Heart right ventricle (tissue), 16 donors: ENCODE measurements at regions of chr10 and their contacts with region 1.

Region 1: DNA sequence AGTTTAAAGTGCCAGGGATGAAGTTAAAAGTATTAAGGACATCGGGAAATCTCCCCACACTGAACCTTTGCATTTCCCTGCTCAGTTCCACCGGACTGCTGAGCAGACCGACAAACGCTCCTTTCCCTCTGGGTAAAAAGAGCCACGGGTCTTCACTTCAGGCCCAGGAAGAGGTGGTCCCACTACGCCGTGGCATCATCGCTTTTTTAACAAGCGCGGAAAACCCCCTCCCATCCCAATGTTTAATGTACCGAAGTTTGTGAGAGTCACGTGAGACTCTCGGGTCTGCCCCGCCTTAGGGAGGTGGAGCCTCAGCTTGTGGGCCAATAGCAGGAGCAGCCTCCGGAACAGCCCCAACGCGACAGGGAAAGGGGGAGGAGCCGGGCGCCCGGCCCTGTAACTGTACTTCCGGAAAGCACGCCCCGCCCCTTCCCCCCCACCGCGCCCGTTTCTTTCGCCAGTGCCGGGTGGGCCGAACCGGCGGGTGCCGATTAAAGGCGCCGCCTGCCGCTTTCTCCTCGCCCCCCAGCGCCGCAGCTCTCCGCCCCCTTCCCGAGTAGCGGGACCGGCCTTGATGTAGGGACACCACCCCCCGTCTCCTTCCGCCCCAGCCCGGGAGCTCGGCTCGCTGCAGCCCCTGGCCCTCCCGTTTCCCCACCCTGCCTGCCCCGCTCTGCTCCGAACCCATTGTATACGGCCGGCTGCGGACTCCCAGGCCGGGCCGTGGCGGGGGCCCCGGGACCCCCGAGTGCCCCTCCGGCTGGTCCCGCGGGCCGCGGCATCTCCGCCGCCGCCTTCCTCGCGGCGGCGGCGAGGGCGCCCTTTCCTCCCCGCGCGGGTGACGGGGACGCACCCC is 2.2 kb upstream of the TRIM8 start:
- DNase-seq: peak; percentile 99
- ATAC-seq: peak; percentile 70 to 84 (median 80)
- H3K4me3 ChIP-seq: peak overlapping the region; percentile 69 to 97 (median 90)
- H3K27ac ChIP-seq: peak overlapping the region; percentile 95 to 100 (median 99)
- H3K4me1 ChIP-seq: peaks cover 4 to 23% (median 13%) of the 10 kb centered on the region in 9 donors
- H3K27me3 ChIP-seq: no peaks in the 10 kb centered on the region
- CTCF ChIP-seq: peak in 3 of 9 donors; percentile 6 to 15 (median 10)

Region 2: GRCh38 chr10:102503281-102504220 is 138.6 kb before region 1 on chr10 and contains the start of gene SUFU:
- intact Hi-C with region 1: loop called in 3 of 10 experiments (anchors 2 to 5 kb)
- DNase-seq: peak; percentile 96 to 99
- ATAC-seq: peak; percentile 80 to 90 (median 84)
- H3K4me3 ChIP-seq: peak within 1 kb of the TSS; percentile 66 to 99 (median 88)
- H3K27ac ChIP-seq: peak within 1 kb of the TSS in 9 of 10 donors; percentile 79 to 96 (median 94)
- H3K4me1 ChIP-seq: peaks cover 11 to 69% (median 47%) of the 10 kb centered on the region in 9 donors
- H3K27me3 ChIP-seq: no peaks in the 10 kb centered on the region
- CTCF ChIP-seq: peak; percentile 89 to 99 (median 94)
- total RNA-seq, gene SUFU: 5.7 to 10.1 (median 7.5) TPM

Region 3: DNA sequence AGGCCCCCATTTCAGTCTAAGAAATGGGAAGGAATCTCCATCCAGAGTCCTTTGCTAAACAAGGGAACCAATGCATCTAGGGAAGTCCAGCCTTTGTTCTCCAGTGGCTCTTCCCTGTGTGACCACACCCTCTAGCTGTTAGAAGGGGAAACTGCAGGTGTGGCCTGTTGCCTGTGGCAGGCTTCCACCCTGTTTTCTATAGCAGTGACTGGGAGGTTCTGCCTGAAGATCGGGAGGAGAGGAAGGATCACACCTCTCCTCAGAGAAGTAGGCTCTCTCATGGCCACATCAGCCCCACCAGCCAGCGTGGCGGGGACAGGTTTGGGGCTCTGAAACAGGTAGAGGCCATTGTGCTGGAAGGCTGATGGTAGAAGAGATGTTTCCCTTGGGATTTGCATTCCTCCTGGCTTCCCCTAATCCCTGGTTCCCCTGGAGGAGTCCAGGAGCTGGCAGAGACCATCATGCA is 45.6 kb before region 1 on chr10:
- intact Hi-C with region 1: loop called in 5 of 10 experiments (anchors 2 to 5 kb)
- DNase-seq: no peak
- ATAC-seq: peak; percentile 39 to 79 (median 56)
- H3K4me3 ChIP-seq: peak overlapping the region in 2 of 10 donors; percentile 4 to 5
- H3K27ac ChIP-seq: peak overlapping the region in 9 of 10 donors; percentile 63 to 93 (median 75)
- H3K4me1 ChIP-seq: peaks cover 20 to 68% (median 62%) of the 10 kb centered on the region in 9 donors
- H3K27me3 ChIP-seq: no peaks in the 10 kb centered on the region
- CTCF ChIP-seq: peak; percentile 64 to 87 (median 80)

Region 4: GRCh38 chr10:102678842-102679289 is 36.8 kb after region 1 on chr10:
- intact Hi-C with region 1: loop called in 2 of 10 experiments (anchors 1 to 2 kb)
- DNase-seq: peak; percentile 63 to 70
- ATAC-seq: peak; percentile 33 to 76 (median 70)
- H3K4me3 ChIP-seq: peak overlapping the region in 4 of 10 donors; percentile 3 to 25 (median 6)
- H3K27ac ChIP-seq: peak overlapping the region in 8 of 10 donors; percentile 35 to 93 (median 44)
- H3K4me1 ChIP-seq: peaks cover 8 to 57% (median 55%) of the 10 kb centered on the region in 9 donors
- H3K27me3 ChIP-seq: no peaks in the 10 kb centered on the region
- CTCF ChIP-seq: peak; percentile 42 to 78 (median 73)